Mammary epithelial cell (primary cell): ENCODE measurements at regions of chr9 and their contacts with region 1.

Region 1: GRCh38 chr9:122642226-122642625 is 15.2 kb downstream of the OR1B1 start:
- DNase-seq: peak; percentile 12
- H3K4me3 ChIP-seq: no peak overlapping the region
- H3K27ac ChIP-seq: no peak overlapping the region
- H3K4me1 ChIP-seq: no peaks in the 10 kb centered on the region
- H3K27me3 ChIP-seq: no peaks in the 10 kb centered on the region
- CTCF ChIP-seq: no peak

Region 2: GRCh38 chr9:122672481-122672880 is 30.3 kb after region 1 on chr9:
- CTCF ChIA-PET with region 1: no interaction called
- dilution Hi-C with region 1: loop called (anchors 5 kb)
- in situ Hi-C with region 1: no loop called
- intact Hi-C with region 1: no loop called
- DNase-seq: no peak
- H3K4me3 ChIP-seq: no peak overlapping the region
- H3K27ac ChIP-seq: no peak overlapping the region
- H3K4me1 ChIP-seq: no peaks in the 10 kb centered on the region
- H3K27me3 ChIP-seq: no peaks in the 10 kb centered on the region
- CTCF ChIP-seq: no peak